Panc1 (cell line): ENCODE measurements at regions of chr19 and their contacts with region 1.

Region 1: DNA sequence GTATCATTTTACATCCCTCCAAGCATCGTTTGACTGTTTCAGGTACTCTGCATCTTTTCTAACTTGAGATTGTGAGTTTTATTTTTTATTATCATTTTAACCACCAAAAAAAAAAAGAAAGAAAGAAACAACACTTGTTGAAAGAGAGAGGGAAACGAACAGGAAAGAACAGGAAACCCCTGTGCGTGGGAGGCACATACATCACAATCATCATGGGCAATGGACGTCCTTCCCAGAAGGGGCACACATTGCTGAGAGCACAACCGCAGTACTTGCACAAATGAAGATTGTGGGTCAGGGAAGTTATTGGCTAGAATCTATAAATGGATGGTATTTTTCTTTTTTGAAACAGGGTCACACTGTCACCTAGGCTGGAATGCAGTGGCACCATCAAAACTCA is 1.7 kb downstream of the CLC start:
- DNase-seq: no peak
- ATAC-seq: no peak
- H3K4me3 ChIP-seq: no peak overlapping the region
- H3K27ac ChIP-seq: no peak overlapping the region
- H3K4me1 ChIP-seq: no peaks in the 10 kb centered on the region
- H3K27me3 ChIP-seq: peaks cover 76% of the 10 kb centered on the region
- CTCF ChIP-seq: no peak

Region 2: DNA sequence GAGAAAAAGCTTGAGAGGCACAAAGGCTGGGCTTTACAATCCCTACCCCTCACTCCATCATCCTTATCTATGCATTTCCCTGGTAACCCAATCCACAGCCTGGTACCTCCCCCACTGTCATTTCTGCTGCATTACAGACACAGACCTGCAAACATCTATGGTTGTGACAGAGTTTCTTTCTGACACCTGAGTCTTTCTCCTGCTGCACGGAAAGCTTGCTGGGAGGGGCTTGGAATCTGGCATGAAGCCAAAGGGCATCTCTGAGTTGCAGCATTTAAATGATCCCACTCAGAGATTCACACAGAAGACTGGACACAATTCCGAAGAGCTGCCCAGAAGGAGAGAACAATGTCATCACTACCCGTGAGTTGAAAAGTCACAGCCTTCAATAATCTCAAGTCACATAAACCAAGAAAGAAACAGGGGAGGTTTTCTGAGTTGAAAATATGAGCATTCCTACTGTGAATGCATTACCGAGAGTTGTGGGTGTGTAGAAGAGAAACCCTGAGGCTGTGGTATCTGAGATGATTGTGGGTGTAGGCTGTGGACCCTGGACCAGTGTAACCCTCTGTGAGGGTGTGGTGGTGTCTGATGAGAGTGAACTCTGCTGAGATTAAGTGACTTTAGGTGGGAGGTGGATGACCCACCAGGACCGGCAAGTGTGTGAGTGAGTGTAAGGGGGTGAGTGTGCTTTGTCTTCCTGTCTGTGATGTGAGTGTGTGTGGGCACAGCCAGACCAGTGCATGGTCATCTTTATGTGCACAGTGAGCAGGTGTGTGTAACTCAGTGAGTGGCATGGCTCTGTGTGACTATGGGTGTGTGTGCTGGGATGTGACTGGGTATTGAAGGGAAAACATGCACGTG is 31.7 kb before region 1 on chr19 and contains the start of gene LGALS14:
- CTCF ChIA-PET with region 1: interaction called, 3 read pairs
- POLR2A ChIA-PET with region 1: interaction called, 13 read pairs
- in situ Hi-C with region 1: no loop called
- intact Hi-C with region 1: no loop called
- DNase-seq: no peak
- ATAC-seq: peak; percentile 52
- H3K4me3 ChIP-seq: no peak within 1 kb of the TSS
- H3K27ac ChIP-seq: no peak within 1 kb of the TSS
- H3K4me1 ChIP-seq: no peaks in the 10 kb centered on the region
- H3K27me3 ChIP-seq: peaks cover 78% of the 10 kb centered on the region
- CTCF ChIP-seq: no peak
- total RNA-seq, gene LGALS14: not detected

Region 3: DNA sequence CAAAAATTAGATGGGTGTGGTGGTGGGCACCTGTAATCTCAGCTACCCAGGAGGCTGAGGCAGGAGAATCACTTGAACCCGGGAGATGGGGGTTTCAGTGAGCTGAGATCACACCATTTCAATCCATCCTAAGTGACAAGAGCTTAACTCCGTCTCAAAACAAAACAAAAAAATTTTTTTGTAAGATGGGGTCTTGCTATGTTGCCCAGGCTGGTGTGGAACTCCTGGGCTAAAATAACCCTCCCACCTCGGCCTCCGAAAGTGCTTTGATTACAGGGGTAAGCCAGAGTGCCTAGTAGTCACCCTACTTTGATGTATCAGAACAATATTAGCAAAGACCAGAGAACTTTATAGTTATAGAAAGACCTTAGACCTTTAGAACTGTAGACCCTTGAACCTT is 738.6 kb after region 1 on chr19:
- CTCF ChIA-PET with region 1: no interaction called
- POLR2A ChIA-PET with region 1: no interaction called
- in situ Hi-C with region 1: no loop called
- intact Hi-C with region 1: no loop called
- DNase-seq: no peak
- ATAC-seq: no peak
- H3K4me3 ChIP-seq: no peak overlapping the region
- H3K27ac ChIP-seq: no peak overlapping the region
- H3K4me1 ChIP-seq: no peaks in the 10 kb centered on the region
- H3K27me3 ChIP-seq: no peaks in the 10 kb centered on the region
- CTCF ChIP-seq: no peak